ENCODE measurements at regions of chr1 and their contacts with region 1.

Region 1: DNA sequence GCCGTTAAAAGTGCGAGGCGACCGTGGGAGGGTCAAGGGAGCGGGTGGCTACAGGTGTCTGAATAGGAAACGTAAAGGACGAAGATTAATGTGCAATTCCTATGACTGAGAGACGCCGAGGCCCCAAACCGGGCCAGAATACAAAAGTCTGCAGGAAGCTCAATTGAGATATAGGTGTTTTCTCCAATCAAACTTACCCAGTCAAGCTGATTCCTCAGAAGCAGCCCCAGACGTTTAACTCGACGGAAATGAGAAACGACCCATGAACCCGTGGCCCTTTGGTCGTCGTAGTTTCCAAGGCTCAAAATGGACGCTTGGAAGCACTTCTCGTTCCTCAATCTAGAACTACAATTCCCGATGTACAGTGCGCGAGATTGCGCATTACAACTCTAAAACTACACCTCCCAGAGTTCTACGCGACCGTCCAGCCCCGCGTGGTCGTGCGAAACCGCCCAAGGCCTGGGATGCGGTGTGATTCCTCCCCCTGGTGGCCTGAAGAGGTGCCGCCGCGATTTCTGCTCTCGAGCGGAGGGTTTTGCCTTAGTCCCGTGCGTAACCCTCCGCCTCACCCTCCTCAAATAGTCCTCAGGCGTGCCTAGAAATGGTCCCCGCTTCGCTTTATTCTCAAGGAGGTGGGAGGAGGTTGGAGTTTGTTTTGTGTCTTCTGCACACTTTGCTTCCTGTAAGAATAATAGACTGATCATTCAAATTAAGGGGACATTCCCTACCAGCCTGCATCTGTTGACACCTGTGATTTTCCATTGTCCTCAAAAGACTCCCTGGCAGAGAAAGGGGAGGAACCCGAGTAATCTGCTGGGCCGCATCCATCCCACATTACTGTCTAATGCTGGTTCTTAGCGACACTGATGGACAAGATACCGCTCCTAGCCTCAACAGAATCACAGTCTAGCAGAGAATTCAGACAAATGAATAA is at the start of gene PAFAH2:
- DNase-seq: peak; percentile 94 to 98 (median 96)
- H3K4me3 ChIP-seq: peak within 1 kb of the TSS; percentile 84
- H3K4me3 Mint-ChIP-seq: peak within 1 kb of the TSS; percentile 88 to 96 (median 94)
- H3K27ac ChIP-seq: peak within 1 kb of the TSS; percentile 88
- H3K27ac Mint-ChIP-seq: peak within 1 kb of the TSS; percentile 96 to 100 (median 99)
- H3K4me1 ChIP-seq: peaks cover 26% of the 10 kb centered on the region
- H3K4me1 Mint-ChIP-seq: peaks cover 33 to 43% (median 37%) of the 10 kb centered on the region in 3 donors
- H3K27me3 ChIP-seq: no peaks in the 10 kb centered on the region
- H3K27me3 Mint-ChIP-seq: peaks cover 0 to 3% of the 10 kb centered on the region in 2 donors
- total RNA-seq, gene PAFAH2: 11.8 to 12.1 TPM

Region 2: GRCh38 chr1:25904943-25905679 is 93.0 kb before region 1 on chr1:
- CTCF ChIA-PET with region 1: interaction called, 38 read pairs
- POLR2A ChIA-PET with region 1: interaction called, 20 read pairs
- DNase-seq: peak; percentile 77 to 93 (median 89)
- H3K4me3 ChIP-seq: peak overlapping the region; percentile 84
- H3K4me3 Mint-ChIP-seq: peak overlapping the region; percentile 85 to 97 (median 92)
- H3K27ac ChIP-seq: peak overlapping the region; percentile 76
- H3K27ac Mint-ChIP-seq: peak overlapping the region; percentile 74 to 96 (median 93)
- H3K4me1 ChIP-seq: peaks cover 12% of the 10 kb centered on the region
- H3K4me1 Mint-ChIP-seq: peaks cover 15 to 26% (median 25%) of the 10 kb centered on the region in 3 donors
- H3K27me3 ChIP-seq: no peaks in the 10 kb centered on the region
- H3K27me3 Mint-ChIP-seq: no peaks in the 10 kb centered on the region

Region 3: GRCh38 chr1:25922056-25922969 is 75.8 kb before region 1 on chr1:
- CTCF ChIA-PET with region 1: interaction called, 7 read pairs
- POLR2A ChIA-PET with region 1: interaction called, 15 read pairs
- DNase-seq: peak; percentile 31 to 75 (median 61)
- H3K4me3 ChIP-seq: peak overlapping the region; percentile 53
- H3K4me3 Mint-ChIP-seq: peak overlapping the region; percentile 84 to 95 (median 86)
- H3K27ac ChIP-seq: no peak overlapping the region
- H3K27ac Mint-ChIP-seq: peak overlapping the region; percentile 32 to 95 (median 72)
- H3K4me1 ChIP-seq: peaks cover 35% of the 10 kb centered on the region
- H3K4me1 Mint-ChIP-seq: peaks cover 27 to 36% (median 29%) of the 10 kb centered on the region in 3 donors
- H3K27me3 ChIP-seq: no peaks in the 10 kb centered on the region
- H3K27me3 Mint-ChIP-seq: no peaks in the 10 kb centered on the region

Region 4: GRCh38 chr1:25971066-25971810 is 26.9 kb before region 1 on chr1:
- CTCF ChIA-PET with region 1: interaction called, 11 read pairs
- POLR2A ChIA-PET with region 1: interaction called, 4 read pairs
- DNase-seq: peak in 2 of 5 donors; percentile 3 to 65
- H3K4me3 ChIP-seq: peak overlapping the region; percentile 17
- H3K4me3 Mint-ChIP-seq: peak overlapping the region in 5 of 7 donors; percentile 21 to 49 (median 33)
- H3K27ac ChIP-seq: no peak overlapping the region
- H3K27ac Mint-ChIP-seq: peak overlapping the region; percentile 68 to 91 (median 84)
- H3K4me1 ChIP-seq: peaks cover 16% of the 10 kb centered on the region
- H3K4me1 Mint-ChIP-seq: peaks cover 22 to 48% (median 37%) of the 10 kb centered on the region in 3 donors
- H3K27me3 ChIP-seq: no peaks in the 10 kb centered on the region
- H3K27me3 Mint-ChIP-seq: peaks cover 0 to 1% of the 10 kb centered on the region in 2 donors